ENCODE measurements at regions of chr5 and their contacts with region 1.

Region 1: DNA sequence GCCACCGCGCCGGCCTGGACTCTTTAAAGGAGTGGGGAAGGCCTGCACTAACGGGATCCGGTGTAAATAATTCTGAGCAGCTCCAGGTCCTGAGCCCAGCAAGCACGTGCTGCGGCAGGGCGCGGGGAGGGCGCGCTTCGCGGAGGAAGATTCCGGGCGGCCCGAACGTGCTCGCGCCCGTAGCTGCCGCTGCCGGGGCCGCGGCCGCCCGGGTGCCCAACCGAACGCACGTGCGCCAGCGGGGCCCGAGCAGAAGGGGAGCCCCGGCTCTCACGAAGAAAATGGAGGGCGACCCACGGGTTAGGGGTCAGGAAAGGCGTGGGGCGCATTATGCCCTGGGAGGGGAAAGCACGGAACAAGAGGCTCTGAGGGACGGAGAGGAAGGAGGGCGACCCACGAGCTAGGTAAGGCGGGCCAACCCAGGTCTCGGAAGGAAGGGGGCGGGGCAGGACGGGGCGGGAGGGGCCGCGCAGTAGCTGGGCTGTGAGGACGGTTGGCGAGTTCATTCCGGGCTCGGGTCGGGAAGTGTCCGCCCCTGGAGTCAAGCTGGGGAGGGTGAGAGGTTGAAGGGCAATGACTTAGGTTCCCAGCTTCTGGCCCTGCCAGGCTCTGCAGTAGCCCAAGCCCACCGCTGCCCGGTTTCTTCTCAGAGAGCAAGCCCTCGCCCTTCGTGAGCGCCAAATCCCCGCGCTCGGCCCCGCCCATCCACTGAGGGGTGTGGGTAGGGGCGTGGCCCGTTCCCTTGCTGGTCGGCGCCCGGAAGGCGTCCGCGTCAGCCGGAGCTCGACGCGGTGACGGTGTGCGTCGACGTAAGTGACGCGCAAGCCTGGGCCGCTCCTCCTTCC is at the start of gene ZNF131:
- H3K4me3 Mint-ChIP-seq: peak within 1 kb of the TSS; percentile 96
- H3K27ac Mint-ChIP-seq: peak within 1 kb of the TSS; percentile 98
- H3K4me1 Mint-ChIP-seq: peaks cover 27% of the 10 kb centered on the region
- H3K27me3 Mint-ChIP-seq: peaks cover 2% of the 10 kb centered on the region

Region 2: GRCh38 chr5:42908509-42909488 is 212.1 kb before region 1 on chr5:
- intact Hi-C with region 1: loop called (anchors 5 kb)
- H3K4me3 Mint-ChIP-seq: peak overlapping the region; percentile 77
- H3K27ac Mint-ChIP-seq: peak overlapping the region; percentile 62
- H3K4me1 Mint-ChIP-seq: peaks cover 9% of the 10 kb centered on the region
- H3K27me3 Mint-ChIP-seq: peaks cover 3% of the 10 kb centered on the region

Region 3: GRCh38 chr5:43040287-43041098 is 80.4 kb before region 1 on chr5 and contains the start of gene ANXA2R:
- intact Hi-C with region 1: loop called (anchors 1 kb)
- H3K4me3 Mint-ChIP-seq: peak within 1 kb of the TSS; percentile 88
- H3K27ac Mint-ChIP-seq: peak within 1 kb of the TSS; percentile 100
- H3K4me1 Mint-ChIP-seq: peaks cover 43% of the 10 kb centered on the region
- H3K27me3 Mint-ChIP-seq: no peaks in the 10 kb centered on the region

Region 4: DNA sequence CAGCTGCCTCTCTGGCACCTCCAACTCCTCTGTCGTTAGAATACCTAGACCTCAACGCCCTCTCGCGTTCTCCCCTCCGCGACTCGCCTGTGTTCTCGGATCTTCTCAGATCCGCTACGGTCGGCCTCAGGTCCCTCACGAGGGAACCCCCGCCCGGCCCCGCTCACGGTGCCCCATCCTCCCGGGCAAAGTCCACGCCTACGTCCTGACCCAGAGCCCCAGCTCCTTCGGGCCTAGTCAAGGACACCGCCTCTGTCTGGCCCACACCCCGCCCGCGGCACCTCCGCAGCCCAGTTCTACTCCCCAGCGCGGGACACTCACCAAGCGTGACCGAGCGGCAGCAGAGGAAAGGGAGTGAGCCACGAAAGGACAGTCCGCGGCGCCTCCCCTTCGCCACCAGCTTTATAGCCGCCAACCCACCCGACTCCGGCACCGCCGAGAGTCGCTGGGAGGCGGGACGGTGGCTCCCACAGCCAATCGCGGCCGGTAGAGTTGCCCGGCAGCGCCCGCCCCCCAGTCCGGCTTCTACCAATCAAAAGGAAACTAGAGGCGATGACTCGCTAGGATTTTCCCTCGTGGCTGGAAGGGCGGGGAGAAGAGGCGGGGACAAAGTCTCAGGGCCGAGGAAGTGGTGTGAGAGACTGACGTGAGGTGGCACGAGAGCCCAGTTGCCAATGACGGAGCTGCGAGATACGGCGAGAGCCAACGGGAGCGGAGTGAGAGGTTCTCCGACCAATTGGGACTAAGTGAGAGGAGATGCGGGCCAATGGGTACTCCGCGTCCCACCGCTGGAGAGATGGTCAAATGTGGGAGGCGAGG is 192.3 kb after region 1 on chr5 and contains the start of gene HMGCS1:
- intact Hi-C with region 1: loop called (anchors 1 kb)
- H3K4me3 Mint-ChIP-seq: peak within 1 kb of the TSS; percentile 98
- H3K27ac Mint-ChIP-seq: peak within 1 kb of the TSS; percentile 98
- H3K4me1 Mint-ChIP-seq: peaks cover 40% of the 10 kb centered on the region
- H3K27me3 Mint-ChIP-seq: peaks cover 5% of the 10 kb centered on the region

Region 5: GRCh38 chr5:43484106-43484849 is 363.3 kb after region 1 on chr5:
- intact Hi-C with region 1: loop called (anchors 5 kb)
- H3K4me3 Mint-ChIP-seq: peak overlapping the region; percentile 96
- H3K27ac Mint-ChIP-seq: peak overlapping the region; percentile 99
- H3K4me1 Mint-ChIP-seq: peaks cover 23% of the 10 kb centered on the region
- H3K27me3 Mint-ChIP-seq: no peaks in the 10 kb centered on the region